Sigmoid colon (tissue), 7 donors: ENCODE measurements at regions of chr6 and their contacts with region 1.

Region 1: DNA sequence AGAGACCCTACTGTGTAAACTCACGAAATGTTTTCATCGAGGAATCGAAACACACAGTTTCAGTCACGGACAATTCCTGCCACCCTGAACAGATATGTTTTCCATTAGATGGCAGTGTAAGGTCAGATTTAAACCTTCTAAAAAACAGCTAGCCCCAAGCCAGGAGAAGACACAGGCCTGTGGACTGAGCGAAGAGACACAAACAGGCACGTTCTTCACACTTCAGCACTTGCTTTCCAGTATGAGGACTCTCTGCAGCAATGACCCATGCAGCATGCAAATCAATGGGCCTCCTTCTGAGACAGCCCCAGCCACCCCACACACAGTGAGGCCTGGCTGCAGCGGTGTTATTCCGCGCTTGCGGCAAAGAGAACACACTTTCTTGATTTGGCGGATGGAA is 31.9 kb downstream of the HUS1B start:
- DNase-seq: peak; percentile 69
- H3K4me3 ChIP-seq: peak overlapping the region in 1 of 4 donors; percentile 5
- H3K27ac ChIP-seq: peak overlapping the region; percentile 61 to 75 (median 67)
- H3K4me1 ChIP-seq: peaks cover 0 to 24% (median 4%) of the 10 kb centered on the region in 4 donors
- H3K27me3 ChIP-seq: no peaks in the 10 kb centered on the region
- CTCF ChIP-seq: peak in 2 of 4 experiments; percentile 11 to 29
- EP300 ChIP-seq: no peak
- POLR2A ChIP-seq: no peak

Region 2: DNA sequence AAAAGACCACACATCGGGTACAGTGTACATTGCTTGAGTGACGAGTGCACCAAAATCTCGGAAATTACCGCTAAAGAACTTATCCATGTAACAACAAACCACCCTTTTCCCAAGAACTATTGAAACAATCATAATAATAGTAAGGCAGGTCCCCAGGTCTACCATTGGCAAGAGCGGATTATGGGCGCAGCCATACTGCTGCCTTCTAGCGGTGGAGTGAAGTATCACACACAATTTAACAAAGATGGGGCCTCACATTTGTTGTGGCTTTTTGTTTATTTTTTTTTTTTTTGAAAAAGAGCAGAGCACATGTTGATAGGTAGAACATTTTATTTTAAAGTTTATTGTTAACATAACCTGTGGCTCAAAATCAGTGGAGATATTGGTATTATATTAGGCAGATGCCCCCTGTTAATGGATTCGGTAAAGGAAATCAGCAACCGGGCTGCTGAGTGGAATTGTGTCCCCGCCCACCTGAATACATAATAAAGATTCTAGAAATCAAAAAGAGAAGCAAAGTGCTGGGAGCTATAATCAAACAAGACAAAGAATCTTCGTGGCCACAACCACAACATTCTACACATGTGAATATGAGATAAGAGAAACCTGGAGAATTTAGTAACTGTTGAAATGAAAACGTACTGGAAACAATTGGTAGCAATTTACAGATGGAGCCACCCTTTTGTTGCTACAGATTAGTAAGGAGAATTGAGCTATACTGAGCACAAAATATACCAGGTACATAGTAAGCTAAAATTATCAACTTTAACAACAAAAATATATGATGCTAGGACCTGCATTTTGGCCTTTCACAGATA is 162.2 kb after region 1 on chr6:
- intact Hi-C with region 1: loop called (anchors 5 kb)
- DNase-seq: no peak
- H3K4me3 ChIP-seq: no peak overlapping the region
- H3K27ac ChIP-seq: no peak overlapping the region
- H3K4me1 ChIP-seq: no peaks in the 10 kb centered on the region
- H3K27me3 ChIP-seq: peaks cover 0 to 20% (median 0%) of the 10 kb centered on the region in 3 donors
- CTCF ChIP-seq: peak in 3 of 4 experiments; percentile 7 to 45 (median 42)
- EP300 ChIP-seq: no peak
- POLR2A ChIP-seq: no peak